ENCODE measurements at regions of chr4 and their contacts with region 1.

Region 1: DNA sequence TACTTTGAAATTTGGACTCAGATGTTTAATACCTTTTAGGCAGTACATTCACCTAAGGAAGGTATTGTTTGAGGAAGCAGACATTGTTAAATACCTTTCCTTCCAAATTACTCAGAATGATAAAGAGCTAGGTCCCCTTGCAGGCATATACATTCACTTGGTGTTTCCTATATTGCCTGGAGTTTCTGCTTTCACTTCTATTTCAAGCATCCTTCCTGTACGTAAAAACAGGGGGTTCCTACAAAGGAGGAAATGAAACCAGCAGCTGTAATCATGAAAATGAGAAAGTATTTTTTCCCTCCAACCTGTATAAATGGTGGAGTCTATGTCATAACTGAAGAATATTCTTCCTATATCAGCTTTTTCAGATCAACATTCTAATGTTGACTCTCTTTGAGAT is 90.4 kb upstream of the RASGEF1B start:
- DNase-seq: no peak
- H3K4me3 Mint-ChIP-seq: no peak overlapping the region
- H3K27ac Mint-ChIP-seq: no peak overlapping the region
- H3K4me1 Mint-ChIP-seq: peaks cover 32% of the 10 kb centered on the region
- H3K27me3 Mint-ChIP-seq: no peaks in the 10 kb centered on the region
- CTCF ChIP-seq: no peak

Region 2: GRCh38 chr4:81421346-81422218 is 140.5 kb before region 1 on chr4:
- CTCF ChIA-PET with region 1: no interaction called
- intact Hi-C with region 1: no loop called
- DNase-seq: peak; percentile 59
- H3K4me3 Mint-ChIP-seq: no peak overlapping the region
- H3K27ac Mint-ChIP-seq: peak overlapping the region; percentile 73
- H3K4me1 Mint-ChIP-seq: peaks cover 26% of the 10 kb centered on the region
- H3K27me3 Mint-ChIP-seq: no peaks in the 10 kb centered on the region
- CTCF ChIP-seq: no peak

Region 3: DNA sequence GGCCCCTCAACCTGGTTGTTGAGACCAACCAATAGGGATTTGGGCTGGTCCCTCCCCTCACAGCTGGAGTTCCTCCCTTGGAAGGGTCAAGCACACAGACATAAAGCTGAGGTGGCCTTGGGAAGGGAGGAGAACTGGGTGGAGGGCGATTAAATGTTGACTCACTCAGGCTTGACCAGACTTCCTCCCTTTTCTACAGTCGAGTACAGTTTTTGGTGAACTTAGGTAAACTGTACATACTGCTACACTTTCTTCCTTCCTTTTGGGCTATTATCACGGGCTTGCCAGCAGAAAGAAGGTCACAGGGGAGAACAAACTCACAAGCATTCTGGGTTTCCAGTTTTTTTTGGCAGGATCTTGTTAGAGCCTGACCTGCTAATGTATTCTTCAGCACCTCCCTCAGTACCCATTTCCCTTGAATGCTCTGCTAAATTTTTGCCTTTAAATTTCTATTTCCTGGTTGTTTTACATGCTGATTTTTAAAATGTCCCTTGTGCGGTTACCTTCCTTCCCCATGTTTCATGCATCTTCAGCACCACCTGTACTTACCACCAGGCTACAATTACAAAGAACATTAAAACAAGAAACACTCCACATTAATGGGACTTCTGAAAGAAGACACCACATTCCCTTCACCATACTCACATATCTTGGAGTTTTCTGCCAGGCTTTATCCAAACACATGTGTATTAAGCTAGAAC is 44.9 kb after region 1 on chr4:
- CTCF ChIA-PET with region 1: no interaction called
- intact Hi-C with region 1: loop called (anchors 5 kb)
- DNase-seq: peak; percentile 6
- H3K4me3 Mint-ChIP-seq: no peak overlapping the region
- H3K27ac Mint-ChIP-seq: peak overlapping the region; percentile 39
- H3K4me1 Mint-ChIP-seq: peaks cover 12% of the 10 kb centered on the region
- H3K27me3 Mint-ChIP-seq: no peaks in the 10 kb centered on the region
- CTCF ChIP-seq: no peak

Measured in Calu3 (cell line).